Dorsolateral prefrontal cortex (tissue), 120 donors: ENCODE measurements at regions of chr3 and their contacts with region 1.

Region 1: GRCh38 chr3:194682694-194683310 is 2.9 kb upstream of the FAM43A start:
- DNase-seq: peak; percentile 33 to 85 (median 70)
- H3K4me3 ChIP-seq: peak overlapping the region in 2 of 59 donors; percentile 15 to 16
- H3K27ac ChIP-seq: peak overlapping the region in 7 of 59 donors; percentile 12 to 54 (median 25)
- H3K27me3 ChIP-seq: peaks cover 0 to 6% (median 0%) of the 10 kb centered on the region in 45 donors
- CTCF ChIP-seq: peak; percentile 58 to 98 (median 92)

Region 2: DNA sequence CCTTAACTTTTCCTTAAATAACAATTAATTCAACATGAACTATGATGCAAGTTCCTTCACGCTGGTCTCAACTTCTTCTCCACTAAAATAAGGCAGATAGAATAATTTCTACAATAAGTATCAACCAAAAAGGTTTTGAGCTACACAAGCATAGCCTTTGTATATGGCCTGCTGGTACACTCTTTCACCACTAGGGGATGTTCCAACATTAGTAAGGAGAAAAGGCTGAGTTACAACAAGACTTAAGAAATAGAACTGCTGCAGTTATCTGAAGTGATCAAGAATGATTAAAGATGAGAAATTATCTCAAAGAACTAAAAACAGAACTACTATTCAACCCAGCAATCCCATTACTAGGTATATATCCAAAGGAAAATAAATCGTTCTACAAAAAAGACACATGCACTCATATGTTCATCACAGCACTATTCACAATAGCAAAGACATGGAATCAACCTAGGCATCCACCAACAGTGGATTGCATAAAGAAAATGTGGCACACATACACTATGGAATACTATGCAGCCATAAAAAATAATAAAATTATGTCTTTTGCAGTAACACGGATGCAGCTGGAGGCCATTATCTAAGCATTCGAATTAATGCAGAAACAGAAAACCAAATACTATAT is 210.4 kb before region 1 on chr3:
- intact Hi-C with region 1: no loop called
- DNase-seq: peak in 1 of 10 donors; percentile 23
- H3K4me3 ChIP-seq: no peak overlapping the region
- H3K27ac ChIP-seq: no peak overlapping the region
- H3K27me3 ChIP-seq: no peaks in the 10 kb centered on the region
- CTCF ChIP-seq: peak; percentile 89 to 99 (median 95)

Region 3: DNA sequence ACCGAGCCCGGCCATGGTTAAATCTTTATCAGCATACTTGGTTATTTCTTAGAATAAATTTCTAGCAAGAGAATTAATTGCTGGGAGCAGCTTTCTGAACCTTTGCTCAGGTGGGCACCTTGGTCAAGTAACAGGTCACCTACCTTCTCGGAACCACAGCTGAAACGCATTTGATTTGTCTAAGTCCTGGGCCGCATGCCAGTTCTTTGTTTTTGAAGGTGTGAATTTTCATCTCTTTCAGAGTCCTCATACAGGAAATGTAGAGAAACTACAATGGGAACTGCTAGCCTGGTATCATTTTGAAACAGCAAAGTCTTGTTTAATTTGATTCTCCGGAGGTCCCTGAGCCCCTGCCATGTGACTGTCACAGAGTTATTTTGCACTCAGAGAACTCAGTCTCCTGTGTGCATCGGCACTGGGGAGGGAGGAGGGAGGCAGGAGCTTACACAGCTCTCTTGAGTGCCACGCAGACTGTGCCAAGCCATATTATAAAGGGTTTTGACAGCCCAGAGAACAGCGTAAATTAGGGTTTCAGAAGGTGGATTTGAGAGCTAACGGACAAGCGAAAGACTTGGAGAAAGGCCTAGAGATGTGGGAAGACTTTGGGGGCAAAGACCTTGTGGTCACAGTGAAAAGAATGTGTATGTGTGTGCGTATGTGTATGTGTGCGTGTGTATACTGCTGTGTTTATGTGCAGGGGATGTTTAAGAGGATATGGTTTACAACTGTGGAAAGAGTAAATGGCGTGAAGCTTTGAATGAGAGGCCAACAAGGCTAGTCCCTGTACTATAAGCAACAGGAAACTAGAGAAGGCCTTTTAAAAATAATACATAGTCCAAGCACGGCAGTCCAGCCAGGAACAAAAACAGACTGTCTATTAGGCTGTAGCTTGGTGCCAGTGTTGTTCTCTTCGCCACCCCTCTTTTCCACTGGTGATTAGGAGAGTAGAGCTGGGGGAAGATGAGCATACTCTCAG is 134.2 kb before region 1 on chr3:
- intact Hi-C with region 1: no loop called
- DNase-seq: no peak
- H3K4me3 ChIP-seq: no peak overlapping the region
- H3K27ac ChIP-seq: peak overlapping the region in 8 of 59 donors; percentile 7 to 47 (median 31)
- H3K27me3 ChIP-seq: no peaks in the 10 kb centered on the region
- CTCF ChIP-seq: no peak

Region 4: GRCh38 chr3:194738254-194739093 is 55.7 kb after region 1 on chr3:
- intact Hi-C with region 1: loop called in 1 of 2 experiments (anchors 5 kb)
- DNase-seq: peak; percentile 74 to 92 (median 88)
- H3K4me3 ChIP-seq: no peak overlapping the region
- H3K27ac ChIP-seq: peak overlapping the region in 13 of 59 donors; percentile 8 to 53 (median 30)
- H3K27me3 ChIP-seq: peaks cover 0 to 4% (median 0%) of the 10 kb centered on the region in 45 donors
- CTCF ChIP-seq: peak in 2 of 56 donors; percentile 22

Region 5: DNA sequence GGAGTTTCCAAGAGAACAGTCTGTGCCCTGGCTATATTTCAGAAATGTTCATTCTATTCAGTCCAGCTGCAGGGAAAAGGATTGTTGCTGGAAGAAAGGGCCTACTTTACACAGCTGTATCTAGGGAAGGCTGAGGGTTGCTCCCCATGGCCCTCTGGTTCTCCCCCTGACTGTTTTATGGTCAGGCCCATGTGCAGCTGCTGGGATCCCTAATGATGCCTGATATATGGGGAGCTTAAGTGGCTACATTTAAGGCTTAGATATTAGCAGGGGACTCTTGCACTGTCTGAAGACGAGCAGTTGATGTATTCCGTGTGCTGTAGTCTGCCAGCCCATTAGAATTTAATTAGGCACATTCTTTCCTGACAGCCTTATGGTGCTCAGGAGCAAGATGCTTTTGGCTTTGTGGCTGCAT is 74.9 kb after region 1 on chr3:
- intact Hi-C with region 1: loop called (anchors 2 to 5 kb)
- DNase-seq: peak in 5 of 10 donors; percentile 43 to 59 (median 45)
- H3K4me3 ChIP-seq: peak overlapping the region in 10 of 59 donors; percentile 2 to 43 (median 20)
- H3K27ac ChIP-seq: peak overlapping the region in 58 of 59 donors; percentile 14 to 97 (median 86)
- H3K27me3 ChIP-seq: peaks cover 0 to 5% (median 0%) of the 10 kb centered on the region in 45 donors
- CTCF ChIP-seq: peak in 1 of 56 donors; percentile 0

Region 6: DNA sequence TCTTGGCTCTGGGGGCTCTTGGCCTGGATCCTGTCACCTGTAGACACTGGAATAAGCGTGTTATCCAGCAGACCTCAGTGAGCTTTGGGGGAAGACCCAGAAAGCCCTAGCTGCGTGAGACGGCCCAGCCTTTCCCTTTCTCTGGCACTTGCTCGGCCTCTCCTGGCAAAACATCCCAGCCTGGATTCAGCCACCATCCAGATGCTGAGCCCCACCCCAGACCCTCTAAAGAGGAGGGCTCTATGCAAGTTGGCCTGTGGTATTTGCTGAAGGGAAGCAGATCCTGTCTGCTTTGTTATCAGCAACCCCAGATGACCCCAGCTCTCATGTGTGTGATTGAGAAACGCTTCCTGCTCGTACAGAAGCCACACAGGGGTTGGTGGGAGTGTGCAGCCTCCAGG is 270.0 kb after region 1 on chr3:
- intact Hi-C with region 1: loop called (anchors 2 to 10 kb)
- DNase-seq: no peak
- H3K4me3 ChIP-seq: no peak overlapping the region
- H3K27ac ChIP-seq: no peak overlapping the region
- H3K27me3 ChIP-seq: no peaks in the 10 kb centered on the region
- CTCF ChIP-seq: no peak

Region 7: DNA sequence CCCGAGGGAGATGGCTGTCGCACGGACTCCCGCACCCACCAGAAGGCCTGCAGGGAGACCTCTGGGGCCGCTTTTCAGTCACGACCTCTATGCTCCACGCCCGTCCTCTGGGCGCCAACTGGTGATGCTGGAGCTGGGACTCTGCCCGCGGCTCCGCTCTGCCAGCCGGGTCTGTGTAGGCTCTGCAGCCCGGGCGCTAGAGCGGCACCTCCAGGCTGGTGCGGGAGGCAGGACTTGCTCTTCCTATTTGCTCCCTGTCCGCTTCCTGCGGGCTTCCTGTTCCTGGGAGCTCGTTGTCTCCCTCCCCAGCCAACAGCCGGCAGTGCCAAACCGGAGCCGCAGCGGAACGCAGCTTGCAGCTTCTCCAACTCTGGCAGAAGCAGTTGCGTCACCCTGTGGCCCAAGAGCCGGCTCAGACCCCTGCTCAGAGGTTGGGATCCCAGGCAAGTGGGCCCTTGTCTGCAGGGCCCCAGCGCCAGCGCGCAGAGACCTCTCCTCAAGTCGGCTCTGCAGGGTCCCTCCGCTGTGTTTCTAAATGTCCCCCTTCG is 302.3 kb after region 1 on chr3:
- intact Hi-C with region 1: loop called in 1 of 2 experiments (anchors 5 kb)
- DNase-seq: peak in 4 of 10 donors; percentile 29 to 54 (median 48)
- H3K4me3 ChIP-seq: peak overlapping the region in 35 of 59 donors; percentile 1 to 47 (median 31)
- H3K27ac ChIP-seq: no peak overlapping the region
- H3K27me3 ChIP-seq: peaks cover 0 to 4% (median 0%) of the 10 kb centered on the region in 45 donors
- CTCF ChIP-seq: peak in 24 of 56 donors; percentile 9 to 40 (median 22)

Region 8: DNA sequence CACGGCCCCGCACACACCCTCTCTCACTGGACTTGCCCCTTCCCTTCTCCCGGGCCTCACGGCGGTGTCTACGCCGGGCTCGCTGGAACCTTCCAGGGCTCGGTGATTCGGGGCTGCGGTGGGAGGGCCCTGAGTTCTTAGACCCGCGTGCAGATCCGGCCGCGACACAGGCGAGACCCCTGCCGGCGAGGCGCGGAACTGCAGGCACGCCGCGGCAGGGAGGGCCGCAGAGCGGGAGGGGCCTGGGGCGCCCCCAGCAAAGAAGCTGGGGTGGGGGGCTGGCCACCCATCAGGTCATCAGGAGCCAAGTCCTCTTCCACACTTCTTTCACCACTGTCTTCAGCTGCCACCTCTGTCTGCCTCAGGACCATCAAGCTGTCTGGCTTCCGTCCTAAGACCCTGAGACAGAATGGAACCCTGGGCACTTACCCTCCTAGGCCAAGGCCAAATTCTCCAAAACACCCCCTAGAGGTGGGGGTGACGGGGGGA is 423.7 kb after region 1 on chr3:
- intact Hi-C with region 1: loop called (anchors 1 kb)
- DNase-seq: peak; percentile 45 to 83 (median 64)
- H3K4me3 ChIP-seq: peak overlapping the region in 58 of 59 donors; percentile 7 to 62 (median 38)
- H3K27ac ChIP-seq: peak overlapping the region in 8 of 59 donors; percentile 14 to 67 (median 40)
- H3K27me3 ChIP-seq: no peaks in the 10 kb centered on the region
- CTCF ChIP-seq: peak; percentile 95 to 100 (median 99)

Region 9: DNA sequence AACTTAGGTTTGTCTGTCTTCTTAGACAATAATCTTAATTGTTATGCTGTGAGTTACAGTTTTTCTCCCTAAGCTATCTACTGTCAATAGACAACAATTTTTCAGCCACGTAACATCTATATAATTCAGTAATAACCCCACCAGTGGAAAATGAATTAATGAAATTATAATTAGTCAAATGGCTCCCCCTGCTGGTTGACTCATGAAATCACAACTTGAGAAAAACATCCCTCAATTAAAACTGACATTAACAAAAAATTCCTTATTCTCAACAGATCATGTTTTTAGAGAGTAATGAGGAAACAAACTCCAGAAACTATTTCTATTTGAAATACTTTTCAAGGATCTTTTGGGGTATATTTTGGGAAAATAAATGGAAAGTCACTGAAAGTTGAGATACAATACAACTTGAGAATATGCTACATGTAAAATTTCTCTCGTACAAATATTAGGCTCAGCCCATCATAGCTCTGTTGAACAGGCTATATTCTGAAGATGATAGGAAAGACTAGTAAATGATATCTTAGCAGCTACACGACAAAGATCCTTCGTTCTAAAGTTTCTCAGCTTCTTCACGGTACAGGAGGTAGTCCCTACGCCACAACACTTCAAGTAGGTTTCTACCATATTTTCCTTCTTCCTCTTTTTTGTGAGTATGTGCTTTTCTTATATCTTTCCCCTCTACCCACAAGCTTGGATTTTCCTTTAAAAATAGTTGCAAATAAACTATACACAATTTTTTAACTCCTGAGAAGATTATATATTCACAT is 839.6 kb after region 1 on chr3:
- intact Hi-C with region 1: loop called (anchors 5 to 10 kb)
- DNase-seq: no peak
- H3K4me3 ChIP-seq: peak overlapping the region in 39 of 59 donors; percentile 3 to 48 (median 24)
- H3K27ac ChIP-seq: no peak overlapping the region
- H3K27me3 ChIP-seq: no peaks in the 10 kb centered on the region
- CTCF ChIP-seq: peak; percentile 73 to 99 (median 89)